Panc1 (cell line): ENCODE measurements at regions of chr12 and their contacts with region 1.

Region 1: GRCh38 chr12:3489057-3489456 is 1.9 kb upstream of the PRMT8 start:
- DNase-seq: no peak
- ATAC-seq: no peak
- H3K4me3 ChIP-seq: no peak overlapping the region
- H3K27ac ChIP-seq: no peak overlapping the region
- H3K4me1 ChIP-seq: no peaks in the 10 kb centered on the region
- H3K27me3 ChIP-seq: peaks cover 4% of the 10 kb centered on the region
- CTCF ChIP-seq: no peak

Region 2: GRCh38 chr12:3587402-3588013 is 98.5 kb after region 1 on chr12:
- CTCF ChIA-PET with region 1: no interaction called
- POLR2A ChIA-PET with region 1: no interaction called
- in situ Hi-C with region 1: no loop called
- intact Hi-C with region 1: no loop called
- DNase-seq: no peak
- ATAC-seq: no peak
- H3K4me3 ChIP-seq: no peak overlapping the region
- H3K27ac ChIP-seq: no peak overlapping the region
- H3K4me1 ChIP-seq: no peaks in the 10 kb centered on the region
- H3K27me3 ChIP-seq: no peaks in the 10 kb centered on the region
- CTCF ChIP-seq: no peak

Region 3: GRCh38 chr12:4460761-4461160 is 971.7 kb after region 1 on chr12:
- CTCF ChIA-PET with region 1: no interaction called
- POLR2A ChIA-PET with region 1: interaction called, 10 read pairs
- in situ Hi-C with region 1: no loop called
- intact Hi-C with region 1: no loop called
- DNase-seq: no peak
- ATAC-seq: no peak
- H3K4me3 ChIP-seq: no peak overlapping the region
- H3K27ac ChIP-seq: no peak overlapping the region
- H3K4me1 ChIP-seq: no peaks in the 10 kb centered on the region
- H3K27me3 ChIP-seq: peaks cover 3% of the 10 kb centered on the region; the same call in 1 of the 2 replicates
- CTCF ChIP-seq: no peak